Transverse colon (tissue), 4 donors: ENCODE measurements at regions of chr15 and their contacts with region 1.

Region 1: DNA sequence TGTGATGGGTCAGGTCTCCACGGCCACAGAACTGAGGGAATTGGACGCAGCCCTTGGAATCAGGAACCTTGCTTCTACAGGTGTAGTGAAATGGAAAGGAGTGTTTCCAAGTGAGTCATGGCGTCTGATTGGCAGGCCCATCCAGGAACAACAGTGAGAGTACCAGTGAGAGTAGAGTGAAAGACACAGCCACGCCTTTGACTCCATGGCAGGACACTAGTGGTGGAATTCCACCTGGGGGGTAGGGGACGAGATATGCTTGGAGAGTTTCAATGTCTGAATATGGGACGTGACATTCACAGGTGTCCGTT is 3.0 kb upstream of the SLC28A1 start:
- DNase-seq: no peak
- H3K4me3 ChIP-seq: no peak overlapping the region
- H3K27ac ChIP-seq: no peak overlapping the region
- H3K4me1 ChIP-seq: no peaks in the 10 kb centered on the region
- H3K27me3 ChIP-seq: no peaks in the 10 kb centered on the region
- CTCF ChIP-seq: no peak
- EP300 ChIP-seq: no peak
- POLR2A ChIP-seq: no peak

Region 2: DNA sequence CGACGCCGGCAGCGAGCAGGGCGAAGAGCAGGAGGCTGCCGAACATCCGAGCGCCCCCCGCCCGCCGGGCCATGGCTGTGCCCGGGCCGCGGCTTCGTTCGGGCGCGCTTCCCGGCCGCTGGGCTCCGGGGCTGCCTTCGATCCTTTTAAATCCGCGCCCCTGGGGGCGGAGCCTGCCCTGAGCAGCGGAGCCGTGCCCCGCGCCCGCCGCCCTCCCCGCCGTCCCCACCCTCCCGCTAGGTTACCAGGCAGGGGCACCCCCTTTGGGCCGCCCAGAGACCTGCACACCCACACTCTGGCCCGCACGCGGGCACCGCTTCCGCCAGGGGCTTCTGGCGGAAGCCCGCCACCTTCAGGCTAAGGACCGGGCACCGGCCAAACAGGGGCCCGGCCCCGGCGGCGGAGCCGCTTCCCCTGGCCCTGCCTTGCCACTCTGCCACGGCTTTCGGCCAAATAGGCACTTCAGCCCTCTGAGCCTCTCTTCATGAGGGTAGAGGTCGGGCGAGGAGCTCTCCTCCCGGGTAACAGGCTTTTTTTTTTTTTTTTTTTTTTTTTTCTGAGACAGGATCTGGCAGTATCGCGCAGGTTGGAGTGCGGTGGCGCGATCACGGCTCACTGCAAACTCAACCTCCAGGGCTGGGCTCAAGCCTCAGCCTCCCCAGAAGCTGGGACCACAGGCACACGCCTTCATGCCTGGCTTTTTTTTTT is 223.2 kb before region 1 on chr15 and contains the start of gene NMB:
- in situ Hi-C with region 1: no loop called
- intact Hi-C with region 1: no loop called
- DNase-seq: peak; percentile 89
- H3K4me3 ChIP-seq: peak within 1 kb of the TSS; percentile 39 to 72 (median 58)
- H3K27ac ChIP-seq: peak within 1 kb of the TSS; percentile 83 to 91 (median 86)
- H3K4me1 ChIP-seq: peaks cover 9 to 25% (median 17%) of the 10 kb centered on the region in 4 donors
- H3K27me3 ChIP-seq: no peaks in the 10 kb centered on the region
- CTCF ChIP-seq: peak; percentile 61 to 76 (median 72)
- EP300 ChIP-seq: no peak
- POLR2A ChIP-seq: peak; percentile 9
- total RNA-seq, gene NMB: 2.3 to 2.4 TPM in 2 of 4 donors, not detected in the others

Region 3: GRCh38 chr15:84816694-84817460 is 64.6 kb before region 1 on chr15 and contains the start of gene ALPK3:
- in situ Hi-C with region 1: no loop called
- intact Hi-C with region 1: no loop called
- DNase-seq: peak; percentile 33
- H3K4me3 ChIP-seq: peak within 1 kb of the TSS; percentile 18 to 51 (median 34)
- H3K27ac ChIP-seq: peak within 1 kb of the TSS; percentile 71 to 87 (median 76)
- H3K4me1 ChIP-seq: peaks cover 9 to 29% (median 15%) of the 10 kb centered on the region in 4 donors
- H3K27me3 ChIP-seq: peaks cover 4% of the 10 kb centered on the region
- CTCF ChIP-seq: peak in 1 of 5 experiments; percentile 4
- EP300 ChIP-seq: no peak
- POLR2A ChIP-seq: no peak
- total RNA-seq, gene ALPK3: 1.1 to 4.6 (median 2.8) TPM

Region 4: DNA sequence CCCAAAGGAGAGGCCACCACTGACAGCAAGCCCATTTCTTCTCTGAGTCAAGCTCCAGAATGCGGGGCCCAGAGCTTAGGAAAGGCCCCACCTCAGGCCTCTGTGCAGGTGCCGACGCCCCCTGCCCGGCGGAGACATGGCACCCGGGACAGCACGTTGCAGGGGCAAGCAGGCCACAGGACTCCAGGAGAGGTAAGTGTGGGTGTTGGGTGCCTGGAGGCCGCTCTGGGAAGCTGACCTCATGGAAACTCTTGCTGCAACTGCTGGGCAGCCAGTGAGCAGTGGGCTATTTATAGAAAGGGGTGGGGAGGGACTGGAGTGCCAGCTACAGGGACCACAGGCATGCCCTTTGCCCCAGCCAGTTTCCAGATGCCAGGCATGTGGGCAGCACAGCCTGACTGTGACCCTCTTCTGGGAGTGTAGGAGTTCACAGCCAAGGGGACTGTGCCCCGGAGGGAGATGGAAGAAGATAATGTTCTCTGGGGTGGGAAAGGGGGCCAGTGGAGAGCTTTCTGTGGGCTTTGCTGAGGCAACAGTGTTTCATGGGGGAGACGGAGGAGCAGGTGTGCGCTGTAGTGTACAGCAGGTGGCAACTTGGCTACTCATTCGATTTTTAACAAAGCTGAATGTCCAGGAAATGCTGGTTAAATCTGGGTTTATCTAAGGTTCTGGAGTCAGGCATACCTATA is 40.6 kb before region 1 on chr15:
- in situ Hi-C with region 1: no loop called
- intact Hi-C with region 1: loop called (anchors 1 kb)
- DNase-seq: peak; percentile 64
- H3K4me3 ChIP-seq: no peak overlapping the region
- H3K27ac ChIP-seq: peak overlapping the region; percentile 71 to 81 (median 76)
- H3K4me1 ChIP-seq: peaks cover 14 to 23% (median 19%) of the 10 kb centered on the region in 4 donors
- H3K27me3 ChIP-seq: no peaks in the 10 kb centered on the region
- CTCF ChIP-seq: no peak
- EP300 ChIP-seq: peak; percentile 84
- POLR2A ChIP-seq: no peak

Region 5: GRCh38 chr15:84929744-84930371 is 48.4 kb after region 1 on chr15:
- in situ Hi-C with region 1: no loop called
- intact Hi-C with region 1: no loop called
- DNase-seq: peak; percentile 85
- H3K4me3 ChIP-seq: no peak overlapping the region
- H3K27ac ChIP-seq: peak overlapping the region in 2 of 4 donors; percentile 14 to 39
- H3K4me1 ChIP-seq: peaks cover 0 to 17% (median 12%) of the 10 kb centered on the region in 4 donors
- H3K27me3 ChIP-seq: no peaks in the 10 kb centered on the region
- CTCF ChIP-seq: no peak
- EP300 ChIP-seq: no peak
- POLR2A ChIP-seq: no peak

Region 6: GRCh38 chr15:85443593-85444087 is 562.2 kb after region 1 on chr15:
- in situ Hi-C with region 1: no loop called
- intact Hi-C with region 1: no loop called
- DNase-seq: no peak
- H3K4me3 ChIP-seq: no peak overlapping the region
- H3K27ac ChIP-seq: peak overlapping the region; percentile 61 to 71 (median 68)
- H3K4me1 ChIP-seq: peaks cover 20 to 55% (median 33%) of the 10 kb centered on the region in 4 donors
- H3K27me3 ChIP-seq: no peaks in the 10 kb centered on the region
- CTCF ChIP-seq: peak in 1 of 5 experiments; percentile 33
- EP300 ChIP-seq: no peak
- POLR2A ChIP-seq: no peak